HepG2 (cell line): ENCODE measurements at regions of chr10 and their contacts with region 1.

Region 1: DNA sequence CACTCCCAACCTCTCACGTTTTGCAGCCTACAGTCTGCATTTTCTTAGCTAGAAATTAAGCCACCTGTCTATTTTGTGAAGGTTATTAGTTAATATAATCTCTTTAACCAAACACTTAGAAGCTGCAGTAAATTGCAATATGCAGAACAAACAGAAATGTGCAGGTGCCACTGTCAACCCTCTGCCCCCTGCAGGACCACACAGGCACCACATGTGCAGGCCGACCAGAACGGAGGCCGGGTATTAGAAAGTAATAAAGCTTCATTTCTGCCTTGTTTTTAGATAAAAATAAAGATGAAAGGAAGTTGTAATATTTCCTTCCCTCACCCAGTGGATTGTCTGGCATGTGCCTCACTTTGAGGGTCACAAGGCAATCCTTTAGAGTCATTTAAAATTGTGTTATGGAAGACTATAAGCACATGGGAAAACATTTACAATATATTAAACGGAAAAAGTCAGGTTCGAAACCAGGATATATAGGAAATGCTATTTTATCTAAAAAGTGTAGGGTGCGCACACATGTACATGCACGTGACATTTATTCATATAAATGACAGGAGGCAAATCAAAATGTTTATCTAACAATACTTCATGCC is 158.2 kb downstream of the ARHGAP12 start:
- DNase-seq: peak; percentile 10
- ATAC-seq: peak; percentile 92
- H3K4me3 ChIP-seq: no peak overlapping the region
- H3K27ac ChIP-seq: no peak overlapping the region
- H3K4me1 ChIP-seq: no peaks in the 10 kb centered on the region
- H3K27me3 ChIP-seq: peaks cover 1 to 4% of the 10 kb centered on the region in 2 experiments; a peak in 1 of 5 replicates
- CTCF ChIP-seq: peak; percentile 76
- EP300 ChIP-seq: no peak
- POLR2A ChIP-seq: no peak
- RAD21 ChIP-seq: peak; percentile 54; the same call in 1 of the 2 replicates

Region 2: GRCh38 chr10:30722956-30723620 is 1047.3 kb before region 1 on chr10:
- CTCF ChIA-PET with region 1: interaction called, 4 read pairs
- POLR2A ChIA-PET with region 1: no interaction called
- in situ Hi-C with region 1: no loop called
- intact Hi-C with region 1: loop called (anchors 1 kb)
- DNase-seq: no peak
- ATAC-seq: no peak
- H3K4me3 ChIP-seq: no peak overlapping the region
- H3K27ac ChIP-seq: no peak overlapping the region
- H3K4me1 ChIP-seq: peaks cover 25% of the 10 kb centered on the region
- H3K27me3 ChIP-seq: peaks cover 5 to 23% of the 10 kb centered on the region in 2 experiments; a peak in 2 of 5 replicates
- CTCF ChIP-seq: no peak
- EP300 ChIP-seq: no peak
- POLR2A ChIP-seq: no peak
- RAD21 ChIP-seq: no peak

Region 3: DNA sequence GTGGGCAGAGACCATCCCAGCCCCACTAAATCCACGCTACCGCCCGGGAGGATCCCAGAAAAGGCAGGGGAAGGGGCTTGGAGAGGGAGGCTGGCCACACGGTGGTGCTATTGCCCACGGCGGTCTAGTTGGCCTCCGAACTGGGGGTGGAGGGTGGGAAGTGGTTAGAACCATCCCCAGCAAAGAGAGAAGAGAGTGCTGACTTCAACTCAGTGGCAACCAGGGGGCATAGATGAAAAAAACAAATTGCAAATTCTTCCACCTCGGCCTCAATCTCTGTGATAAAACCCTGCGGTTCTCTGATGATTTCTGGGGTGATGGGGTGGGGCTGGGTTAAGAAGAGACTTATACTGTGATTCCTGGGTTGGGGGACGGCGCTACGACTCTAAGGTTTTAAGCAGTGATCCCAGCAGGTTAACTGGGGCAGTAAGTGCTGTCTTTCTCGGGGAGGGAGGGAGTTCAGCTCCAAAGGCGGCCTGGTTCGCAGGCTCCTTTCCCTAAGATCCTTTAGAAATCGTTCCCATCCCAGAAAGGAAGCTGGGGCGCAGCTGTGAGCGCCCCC is 986.4 kb before region 1 on chr10:
- CTCF ChIA-PET with region 1: interaction called, 13 read pairs
- POLR2A ChIA-PET with region 1: no interaction called
- in situ Hi-C with region 1: loop called (anchors 25 kb)
- intact Hi-C with region 1: no loop called
- DNase-seq: peak; percentile 22
- ATAC-seq: peak; percentile 90
- H3K4me3 ChIP-seq: no peak overlapping the region
- H3K27ac ChIP-seq: no peak overlapping the region
- H3K4me1 ChIP-seq: 0 out of 2 replicates have a peak, but pooled peaks cover 7% of the 10 kb centered on the region
- H3K27me3 ChIP-seq: peaks cover 0 to 62% of the 10 kb centered on the region in 2 experiments; a peak in 4 of 5 replicates
- CTCF ChIP-seq: peak; percentile 86
- EP300 ChIP-seq: no peak
- POLR2A ChIP-seq: no peak
- RAD21 ChIP-seq: peak; percentile 75

Region 4: DNA sequence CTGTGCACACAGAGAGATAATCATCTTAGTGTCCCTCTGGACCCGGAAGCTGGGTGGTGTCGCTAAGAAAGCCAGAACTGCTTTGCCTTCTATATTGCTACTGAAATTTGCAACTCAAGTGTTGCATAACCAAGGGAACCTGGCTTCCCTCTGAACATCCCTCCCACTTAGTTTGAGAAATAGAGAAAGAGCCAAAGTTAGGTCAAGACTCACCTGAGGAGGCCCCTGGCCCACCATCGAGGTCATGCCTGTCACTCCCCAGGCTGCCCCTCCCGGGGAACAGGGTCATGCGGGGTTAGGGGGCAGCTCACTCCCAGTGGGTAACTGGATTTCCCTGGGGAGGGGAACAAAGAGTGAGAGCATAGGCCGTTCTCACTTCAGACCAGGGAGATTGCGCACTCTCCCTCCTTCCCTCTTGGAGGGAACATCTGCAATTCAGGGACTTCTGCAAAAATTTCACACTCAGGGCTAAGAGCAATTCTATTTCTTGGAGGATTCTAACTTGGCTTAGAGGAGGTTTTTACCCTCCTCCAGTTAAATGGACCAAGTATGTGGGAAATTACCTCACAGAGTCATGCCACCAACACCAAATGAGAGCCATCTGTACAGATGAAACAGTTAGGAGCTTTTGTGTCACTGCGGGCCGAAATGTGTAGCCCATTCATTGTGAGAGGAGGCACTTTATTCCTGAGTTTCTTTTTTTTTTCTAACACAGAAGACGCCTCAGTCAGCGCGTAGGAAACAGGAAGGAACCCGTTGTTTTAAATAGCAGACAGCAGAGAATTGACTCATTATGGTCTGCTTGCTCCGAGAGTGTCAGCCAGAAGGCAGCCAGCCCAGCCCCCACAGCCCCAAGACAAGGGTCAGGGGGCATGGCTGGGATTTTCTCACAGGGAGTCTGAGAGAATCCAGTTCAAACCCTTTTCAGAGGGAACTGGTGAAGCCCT is 63.0 kb before region 1 on chr10:
- CTCF ChIA-PET with region 1: interaction called, 9 read pairs
- POLR2A ChIA-PET with region 1: no interaction called
- in situ Hi-C with region 1: no loop called
- intact Hi-C with region 1: loop called (anchors 5 kb)
- DNase-seq: no peak
- ATAC-seq: no peak
- H3K4me3 ChIP-seq: no peak overlapping the region
- H3K27ac ChIP-seq: no peak overlapping the region
- H3K4me1 ChIP-seq: peaks cover 9% of the 10 kb centered on the region; the same call in 1 of the 2 replicates
- H3K27me3 ChIP-seq: no peaks in the 10 kb centered on the region
- CTCF ChIP-seq: no peak
- EP300 ChIP-seq: no peak
- POLR2A ChIP-seq: no peak
- RAD21 ChIP-seq: no peak